CD4-positive, alpha-beta memory T cell (primary cell): ENCODE measurements at regions of chr1 and their contacts with region 1.

Region 1: DNA sequence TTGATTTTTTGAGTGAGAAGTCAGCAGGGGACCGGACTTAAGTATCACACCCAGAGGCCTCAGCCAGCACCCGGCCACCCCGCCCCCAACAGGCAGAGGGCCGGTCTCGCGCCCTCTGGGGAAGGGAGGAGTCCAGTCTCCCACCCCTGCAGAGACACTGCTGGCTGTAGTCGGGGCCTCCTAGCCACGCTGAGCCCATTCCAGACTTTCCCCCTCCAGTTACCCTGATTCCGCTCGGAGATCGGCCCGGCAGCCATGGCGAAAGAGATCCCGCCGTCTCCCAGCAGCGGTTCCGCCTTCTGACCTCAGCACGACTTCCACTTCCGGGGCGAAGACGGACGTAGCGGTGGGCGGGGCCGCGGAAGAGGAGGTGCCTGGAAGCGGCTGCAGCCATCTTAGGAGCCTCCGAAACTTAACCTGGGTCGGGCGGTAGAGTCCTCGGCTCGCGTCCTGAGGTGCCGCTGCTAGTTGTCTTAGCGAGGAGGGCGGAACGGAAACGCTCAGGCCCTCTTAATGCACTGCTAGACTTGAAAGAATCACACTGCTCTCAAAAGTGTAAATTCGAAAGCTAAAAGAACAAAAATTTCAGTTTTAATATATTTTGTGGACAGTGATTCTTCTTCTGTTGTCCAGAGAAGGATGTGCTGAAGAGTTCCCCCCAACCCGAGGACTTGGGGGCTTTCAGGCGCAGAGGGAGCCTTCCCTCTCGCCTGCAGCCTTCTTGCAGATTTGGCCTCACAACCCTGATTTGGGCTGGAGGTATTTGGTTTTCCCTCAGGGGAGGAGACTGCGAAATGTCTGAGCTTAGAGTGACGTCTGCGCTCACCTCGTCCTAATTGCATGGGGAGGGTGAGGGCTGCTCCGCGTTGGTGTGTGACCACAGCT is at the start of gene SF3B4:
- DNase-seq: peak; percentile 93 to 97 (median 94)
- H3K4me3 ChIP-seq: peak within 1 kb of the TSS; percentile 80 to 86
- H3K4me3 Mint-ChIP-seq: peak within 1 kb of the TSS; percentile 90 to 98 (median 96)
- H3K27ac ChIP-seq: peak within 1 kb of the TSS; percentile 87
- H3K27ac Mint-ChIP-seq: peak within 1 kb of the TSS; percentile 95 to 98 (median 97)
- H3K4me1 ChIP-seq: peaks cover 40% of the 10 kb centered on the region
- H3K4me1 Mint-ChIP-seq: peaks cover 28 to 53% (median 41%) of the 10 kb centered on the region in 4 donors
- H3K27me3 ChIP-seq: no peaks in the 10 kb centered on the region
- H3K27me3 Mint-ChIP-seq: peaks cover 3% of the 10 kb centered on the region in 2 donors
- total RNA-seq, gene SF3B4: 47.7 to 48.8 TPM

Region 2: DNA sequence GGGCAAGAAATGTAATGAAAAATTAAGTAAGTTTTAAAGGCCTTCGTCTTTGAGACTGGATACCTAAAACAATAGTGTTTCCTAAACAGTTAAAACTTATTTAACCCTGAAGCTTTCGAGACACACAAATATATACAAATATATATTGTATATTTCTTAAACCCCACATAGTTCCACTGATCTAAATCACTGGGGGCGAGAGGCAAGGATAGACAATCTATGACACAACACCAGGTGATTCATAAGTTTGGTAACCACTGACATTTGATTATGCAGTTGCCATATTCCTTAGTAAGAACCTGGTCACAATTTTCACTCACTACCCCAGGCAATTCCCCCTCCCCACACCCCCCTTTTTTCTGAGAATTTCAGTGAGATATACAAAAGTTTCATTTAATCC is 83.6 kb before region 1 on chr1:
- CTCF ChIA-PET with region 1: no interaction called
- POLR2A ChIA-PET with region 1: interaction called, 11 read pairs
- intact Hi-C with region 1: no loop called
- DNase-seq: peak in 3 of 5 donors; percentile 11 to 59 (median 21)
- H3K4me3 ChIP-seq: peak overlapping the region; percentile 56 to 74
- H3K4me3 Mint-ChIP-seq: peak overlapping the region; percentile 84 to 93 (median 89)
- H3K27ac ChIP-seq: peak overlapping the region; percentile 69
- H3K27ac Mint-ChIP-seq: peak overlapping the region; percentile 85 to 96 (median 89)
- H3K4me1 ChIP-seq: peaks cover 46% of the 10 kb centered on the region
- H3K4me1 Mint-ChIP-seq: peaks cover 41 to 57% (median 47%) of the 10 kb centered on the region in 4 donors
- H3K27me3 ChIP-seq: no peaks in the 10 kb centered on the region
- H3K27me3 Mint-ChIP-seq: no peaks in the 10 kb centered on the region

Region 3: DNA sequence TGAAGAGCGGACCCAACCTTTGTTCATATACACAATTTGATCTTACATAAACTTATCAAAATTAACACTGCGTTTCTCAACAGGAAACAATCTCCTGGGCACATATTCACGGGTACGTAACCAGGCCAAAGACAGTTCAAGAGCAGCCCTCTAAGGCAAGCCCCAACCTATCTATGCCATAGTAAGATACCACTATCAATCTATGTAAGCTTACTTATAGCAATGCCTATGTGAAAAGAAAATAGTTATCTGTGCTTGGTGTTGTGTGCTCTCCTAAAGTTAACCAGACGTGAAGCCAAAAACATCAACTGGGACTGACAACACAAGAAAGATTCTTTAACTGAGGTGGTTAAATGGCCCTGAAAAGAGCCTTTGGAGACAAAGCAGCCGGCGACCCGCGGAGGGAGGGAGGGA is 77.8 kb before region 1 on chr1:
- CTCF ChIA-PET with region 1: no interaction called
- POLR2A ChIA-PET with region 1: interaction called, 10 read pairs
- intact Hi-C with region 1: no loop called
- DNase-seq: peak; percentile 16 to 32 (median 30)
- H3K4me3 ChIP-seq: peak overlapping the region; percentile 53 to 62
- H3K4me3 Mint-ChIP-seq: peak overlapping the region; percentile 86 to 97 (median 93)
- H3K27ac ChIP-seq: peak overlapping the region; percentile 83
- H3K27ac Mint-ChIP-seq: peak overlapping the region; percentile 85 to 99 (median 91)
- H3K4me1 ChIP-seq: peaks cover 50% of the 10 kb centered on the region
- H3K4me1 Mint-ChIP-seq: peaks cover 39 to 52% (median 47%) of the 10 kb centered on the region in 4 donors
- H3K27me3 ChIP-seq: no peaks in the 10 kb centered on the region
- H3K27me3 Mint-ChIP-seq: no peaks in the 10 kb centered on the region

Region 4: GRCh38 chr1:149899460-149900293 is 28.1 kb before region 1 on chr1 and contains the start of gene BOLA1:
- CTCF ChIA-PET with region 1: interaction called, 3 read pairs
- POLR2A ChIA-PET with region 1: interaction called, 16 read pairs
- intact Hi-C with region 1: loop called (anchors 1 kb)
- DNase-seq: peak; percentile 73 to 86 (median 78)
- H3K4me3 ChIP-seq: peak within 1 kb of the TSS; percentile 79 to 96
- H3K4me3 Mint-ChIP-seq: peak within 1 kb of the TSS; percentile 89 to 97 (median 93)
- H3K27ac ChIP-seq: peak within 1 kb of the TSS; percentile 77
- H3K27ac Mint-ChIP-seq: peak within 1 kb of the TSS; percentile 89 to 98 (median 94)
- H3K4me1 ChIP-seq: peaks cover 16% of the 10 kb centered on the region
- H3K4me1 Mint-ChIP-seq: peaks cover 10 to 25% (median 19%) of the 10 kb centered on the region in 4 donors
- H3K27me3 ChIP-seq: no peaks in the 10 kb centered on the region
- H3K27me3 Mint-ChIP-seq: no peaks in the 10 kb centered on the region
- total RNA-seq, gene BOLA1: 25.2 TPM

Region 5: GRCh38 chr1:150010393-150011115 is 82.8 kb after region 1 on chr1 and contains the start of gene OTUD7B:
- CTCF ChIA-PET with region 1: no interaction called
- POLR2A ChIA-PET with region 1: interaction called, 10 read pairs
- intact Hi-C with region 1: no loop called
- DNase-seq: peak; percentile 46 to 64 (median 49)
- H3K4me3 ChIP-seq: peak within 1 kb of the TSS; percentile 64 to 87
- H3K4me3 Mint-ChIP-seq: peak within 1 kb of the TSS; percentile 89 to 99 (median 96)
- H3K27ac ChIP-seq: peak within 1 kb of the TSS; percentile 63
- H3K27ac Mint-ChIP-seq: peak within 1 kb of the TSS; percentile 62 to 94 (median 91)
- H3K4me1 ChIP-seq: peaks cover 20% of the 10 kb centered on the region
- H3K4me1 Mint-ChIP-seq: peaks cover 22 to 36% (median 26%) of the 10 kb centered on the region in 4 donors
- H3K27me3 ChIP-seq: no peaks in the 10 kb centered on the region
- H3K27me3 Mint-ChIP-seq: no peaks in the 10 kb centered on the region
- total RNA-seq, gene OTUD7B: 15.3 to 17.6 TPM